ENCODE measurements at regions of chr14 and their contacts with region 1.

Region 1: GRCh38 chr14:35695647-35696046 is 113.4 kb downstream of the RALGAPA1 start:
- DNase-seq: no peak
- ATAC-seq: no peak
- H3K4me3 ChIP-seq: no peak overlapping the region
- H3K27ac ChIP-seq: no peak overlapping the region
- H3K4me1 ChIP-seq: no peaks in the 10 kb centered on the region
- H3K27me3 ChIP-seq: no peaks in the 10 kb centered on the region
- CTCF ChIP-seq: no peak
- POLR2A ChIP-seq: no peak

Region 2: GRCh38 chr14:35814371-35815005 is 118.8 kb after region 1 on chr14:
- intact Hi-C with region 1: loop called in 1 of 10 experiments (anchors 10 kb)
- DNase-seq: peak in 4 of 5 donors; percentile 23 to 48 (median 43)
- ATAC-seq: peak in 3 of 4 donors; percentile 42 to 53 (median 49)
- H3K4me3 ChIP-seq: no peak overlapping the region
- H3K27ac ChIP-seq: no peak overlapping the region
- H3K4me1 ChIP-seq: peaks cover 0 to 2% (median 0%) of the 10 kb centered on the region in 12 donors
- H3K27me3 ChIP-seq: no peaks in the 10 kb centered on the region
- CTCF ChIP-seq: peak; percentile 49 to 81 (median 66)
- POLR2A ChIP-seq: no peak

Measured in heart left ventricle (tissue), 16 donors.